PC-9 (cell line): ENCODE measurements at regions of chr10 and their contacts with region 1.

Region 1: DNA sequence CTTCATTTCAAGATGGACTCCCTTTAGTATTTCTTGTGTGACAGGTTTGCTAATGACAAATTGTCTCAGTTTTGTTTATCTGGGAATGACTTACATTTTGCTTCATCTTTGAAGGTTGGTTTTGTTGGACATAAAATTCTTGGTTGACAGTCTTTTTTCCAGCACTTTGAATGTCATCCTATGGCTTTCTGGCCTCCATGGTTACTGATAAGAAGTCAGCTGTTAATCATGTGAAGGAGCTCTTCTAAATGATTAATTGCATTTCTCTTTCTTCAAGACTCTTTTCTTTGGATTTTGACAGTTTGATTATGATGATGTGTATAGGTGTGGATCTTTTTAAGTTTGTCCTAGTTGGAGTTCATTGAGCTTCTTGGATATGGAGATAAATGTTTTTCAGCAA is 26.9 kb upstream of the HHEX start:
- DNase-seq: no peak
- H3K4me3 ChIP-seq: no peak overlapping the region
- H3K27ac ChIP-seq: no peak overlapping the region
- H3K4me1 ChIP-seq: no peaks in the 10 kb centered on the region
- H3K27me3 ChIP-seq: no peaks in the 10 kb centered on the region
- CTCF ChIP-seq: no peak

Region 2: DNA sequence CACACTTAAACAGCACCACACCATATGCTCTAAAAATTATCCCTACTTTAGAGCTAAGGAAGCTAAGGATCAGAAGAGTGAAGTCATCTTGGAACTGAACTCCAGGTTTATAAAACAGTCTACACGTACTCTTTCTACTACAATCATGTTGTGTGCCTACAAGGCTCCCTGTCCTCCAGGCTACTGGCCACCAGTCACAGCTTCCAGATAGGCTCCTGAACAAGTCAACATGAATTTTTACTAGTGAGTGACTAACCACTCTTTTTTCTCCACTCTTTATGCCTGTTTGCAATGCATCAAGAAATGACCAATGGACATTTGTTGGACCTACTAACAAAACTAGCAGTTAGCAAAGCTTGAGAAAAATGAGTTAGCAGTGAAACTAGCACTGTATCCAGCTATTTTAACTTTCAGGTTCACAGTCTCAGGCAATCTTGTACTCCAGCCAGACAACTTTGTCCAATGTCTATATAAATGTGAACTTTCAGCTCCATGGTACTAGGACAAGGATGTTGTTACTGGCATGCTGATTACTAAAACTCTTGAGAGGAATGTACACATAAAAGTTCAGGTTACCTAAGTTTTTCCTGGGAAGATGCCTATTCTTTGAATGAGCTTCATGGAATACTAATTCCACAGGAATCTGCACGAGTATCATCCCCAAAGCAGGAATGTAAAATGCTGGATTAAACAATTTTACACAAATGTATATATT is 559.3 kb before region 1 on chr10:
- CTCF ChIA-PET with region 1: no interaction called
- POLR2A ChIA-PET with region 1: no interaction called
- intact Hi-C with region 1: no loop called
- DNase-seq: no peak
- H3K4me3 ChIP-seq: no peak overlapping the region
- H3K27ac ChIP-seq: no peak overlapping the region
- H3K4me1 ChIP-seq: peaks cover 19% of the 10 kb centered on the region
- H3K27me3 ChIP-seq: no peaks in the 10 kb centered on the region
- CTCF ChIP-seq: no peak

Region 3: GRCh38 chr10:92848441-92849233 is 185.8 kb after region 1 on chr10 and contains the start of gene EXOC6:
- CTCF ChIA-PET with region 1: interaction called, 18 read pairs
- POLR2A ChIA-PET with region 1: no interaction called
- intact Hi-C with region 1: no loop called
- DNase-seq: peak; percentile 41 to 67
- H3K4me3 ChIP-seq: peak within 1 kb of the TSS; percentile 83
- H3K27ac ChIP-seq: peak within 1 kb of the TSS; percentile 59
- H3K4me1 ChIP-seq: peaks cover 19% of the 10 kb centered on the region
- H3K27me3 ChIP-seq: no peaks in the 10 kb centered on the region
- CTCF ChIP-seq: no peak
- total RNA-seq, gene EXOC6: 9.3 and 12.5 TPM in 2 replicates